Left ventricle myocardium superior (tissue), 1 donor: ENCODE measurements at regions of chr3 and their contacts with region 1.

Region 1: DNA sequence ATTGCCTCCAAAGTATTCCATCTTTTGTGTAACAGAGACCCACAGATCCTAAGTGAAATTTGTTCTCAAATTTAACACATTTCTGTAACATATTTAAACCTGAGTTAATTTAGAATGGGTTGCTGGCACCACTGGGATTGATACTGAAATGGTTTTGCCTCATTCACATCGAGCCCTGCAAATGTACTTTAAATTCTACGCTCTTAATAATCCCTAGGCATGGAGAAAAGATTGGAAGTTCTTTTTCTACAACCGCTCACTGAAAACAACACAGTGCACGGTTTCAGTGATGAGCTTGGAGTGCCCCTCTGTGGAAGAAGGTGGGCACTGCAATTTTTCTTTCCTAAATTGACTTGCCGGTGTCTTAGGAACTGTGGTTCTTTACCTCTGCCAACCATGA is 109.9 kb upstream of the ATP11B start:
- DNase-seq: peak; percentile 35
- ATAC-seq: peak; percentile 88

Region 2: GRCh38 chr3:181700168-181701087 is 983.0 kb before region 1 on chr3:
- intact Hi-C with region 1: loop called (anchors 10 kb)
- DNase-seq: peak; percentile 47
- ATAC-seq: peak; percentile 86

Region 3: GRCh38 chr3:183081459-183082183 is 398.2 kb after region 1 on chr3:
- intact Hi-C with region 1: no loop called
- DNase-seq: no peak
- ATAC-seq: no peak